OCI-LY7 (cell line): ENCODE measurements at regions of chr17 and their contacts with region 1.

Region 1: GRCh38 chr17:40113110-40113906 is 8.5 kb upstream of the MSL1 start:
- DNase-seq: peak; percentile 97
- H3K4me3 ChIP-seq: peak overlapping the region; percentile 64
- H3K27ac ChIP-seq: peak overlapping the region; percentile 78
- H3K4me1 ChIP-seq: peaks cover 60% of the 10 kb centered on the region
- CTCF ChIP-seq: peak; percentile 95

Region 2: DNA sequence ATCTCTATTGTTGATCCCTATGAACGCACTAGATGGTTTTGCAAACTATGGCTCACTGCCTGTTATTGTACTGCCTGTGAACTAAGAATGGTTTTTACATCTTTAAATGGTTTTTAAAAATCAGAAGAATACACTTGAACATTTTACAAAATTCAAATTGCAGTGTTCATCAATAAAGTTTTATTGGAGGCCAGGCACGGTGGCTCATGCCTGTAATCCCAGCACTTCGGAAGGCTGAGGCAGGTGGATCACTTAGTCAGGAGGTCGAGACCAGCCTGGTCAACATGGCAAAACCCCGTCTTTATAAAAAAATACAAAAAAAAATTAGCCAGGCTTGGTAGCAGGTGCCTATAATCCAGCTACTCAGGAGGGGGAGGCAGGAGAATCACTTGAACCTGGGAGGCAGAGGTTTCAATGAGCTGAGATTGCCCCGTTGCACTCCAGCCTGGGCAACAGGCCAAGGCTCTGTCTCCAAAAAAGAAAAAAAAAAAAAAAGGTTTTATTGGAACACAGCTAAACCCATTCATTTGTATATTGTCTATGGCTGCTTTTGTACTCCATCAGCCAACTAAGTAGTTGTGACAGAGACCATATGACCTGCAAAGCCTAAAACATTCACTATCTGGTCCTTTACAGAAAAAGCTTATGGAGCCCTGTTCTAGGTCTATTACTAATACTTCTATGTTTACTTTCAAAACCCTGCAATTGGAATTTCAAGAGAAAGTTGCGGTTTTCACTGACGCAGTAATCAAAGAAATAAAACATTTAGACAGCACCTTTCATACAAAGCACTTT is 268.1 kb before region 1 on chr17:
- CTCF ChIA-PET with region 1: no interaction called
- POLR2A ChIA-PET with region 1: no interaction called
- intact Hi-C with region 1: no loop called
- DNase-seq: no peak
- H3K4me3 ChIP-seq: no peak overlapping the region
- H3K27ac ChIP-seq: no peak overlapping the region
- H3K4me1 ChIP-seq: peaks cover 76% of the 10 kb centered on the region
- CTCF ChIP-seq: no peak

Region 3: DNA sequence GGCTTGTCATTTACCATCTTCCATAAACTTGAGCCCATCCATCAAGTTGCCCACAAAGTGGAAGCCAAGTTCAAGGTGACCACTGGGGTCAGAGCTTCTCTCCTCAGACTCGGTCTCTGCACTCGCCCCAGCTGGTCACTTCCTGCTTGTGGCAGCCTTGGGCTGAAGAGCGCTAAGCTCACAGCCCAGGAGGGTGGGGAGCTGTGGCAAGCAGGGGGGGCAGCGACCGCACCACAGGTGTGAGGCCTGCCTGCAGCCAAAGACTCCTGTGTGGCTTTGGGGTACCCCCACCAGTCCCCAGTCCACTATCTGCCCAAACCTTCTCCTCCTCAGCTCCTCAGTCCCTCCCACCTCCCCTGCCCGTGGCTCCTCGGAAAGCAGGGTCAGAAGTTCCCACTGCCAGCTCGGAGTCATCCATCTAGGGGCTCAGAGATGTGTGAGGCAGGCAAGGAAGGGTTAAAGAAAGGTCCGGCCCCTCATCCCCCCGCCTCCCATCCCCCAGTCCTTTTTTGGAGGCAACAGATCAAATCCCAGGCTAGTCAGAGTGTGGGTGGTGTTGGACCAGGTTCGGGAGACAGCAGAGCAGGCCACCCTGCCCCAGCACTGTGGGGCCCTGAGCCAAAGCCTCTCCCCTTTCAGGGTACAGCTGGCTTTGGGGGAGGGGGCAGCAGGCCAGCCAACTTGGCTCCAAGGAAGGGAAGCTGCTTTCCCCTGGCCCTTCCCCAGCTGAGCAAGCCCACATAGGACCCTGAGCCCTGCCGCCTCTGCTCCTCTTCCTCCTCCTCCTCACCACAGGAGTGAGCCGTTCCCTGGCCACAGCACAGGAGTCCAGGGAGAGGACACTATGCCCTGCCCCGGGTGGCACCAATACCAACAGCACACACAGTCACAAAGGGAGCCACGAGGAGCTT is 94.8 kb before region 1 on chr17:
- CTCF ChIA-PET with region 1: no interaction called
- POLR2A ChIA-PET with region 1: no interaction called
- intact Hi-C with region 1: loop called (anchors 1 kb)
- DNase-seq: no peak
- H3K4me3 ChIP-seq: no peak overlapping the region
- H3K27ac ChIP-seq: no peak overlapping the region
- H3K4me1 ChIP-seq: no peaks in the 10 kb centered on the region
- CTCF ChIP-seq: no peak

Region 4: DNA sequence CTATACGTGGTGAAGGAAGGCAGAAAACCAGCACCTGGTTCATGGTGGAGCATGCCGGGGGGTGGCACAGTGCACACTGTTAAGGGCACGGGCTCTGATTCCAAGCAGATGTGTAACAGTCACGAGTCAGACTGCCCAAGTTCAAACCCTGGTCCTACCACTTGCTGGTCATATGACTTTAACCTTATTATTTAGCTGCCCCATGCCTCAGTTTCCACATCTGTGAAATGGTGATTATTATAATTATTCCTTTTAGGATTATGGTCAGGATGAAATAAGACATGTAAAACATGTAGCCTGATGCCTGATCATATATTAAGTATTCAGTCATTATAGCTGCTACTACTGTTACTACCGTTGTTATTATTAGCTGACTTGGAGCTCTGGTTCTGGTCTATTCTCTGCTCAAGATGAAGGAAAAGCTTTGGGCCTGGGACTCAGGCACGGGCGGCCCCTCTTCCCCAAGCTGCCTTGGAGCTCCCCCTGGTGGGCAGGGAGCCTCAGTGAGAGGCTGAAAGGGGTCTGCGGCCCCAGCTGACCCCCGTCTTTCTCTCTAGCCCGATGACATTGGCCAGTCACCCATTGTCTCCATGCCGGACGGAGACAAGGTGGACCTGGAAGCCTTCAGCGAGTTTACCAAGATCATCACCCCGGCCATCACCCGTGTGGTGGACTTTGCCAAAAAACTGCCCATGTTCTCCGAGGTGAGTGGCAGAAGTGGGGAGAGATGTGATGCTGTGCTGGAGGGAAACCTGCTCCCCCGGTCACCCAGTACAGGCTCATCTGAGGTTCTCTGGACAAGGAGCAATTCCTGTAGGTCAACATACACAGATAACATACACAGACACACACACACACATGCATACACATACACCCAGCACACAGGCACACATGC is 26.9 kb before region 1 on chr17:
- CTCF ChIA-PET with region 1: interaction called, 6 read pairs
- POLR2A ChIA-PET with region 1: no interaction called
- intact Hi-C with region 1: loop called (anchors 1 kb)
- DNase-seq: peak; percentile 77
- H3K4me3 ChIP-seq: no peak overlapping the region
- H3K27ac ChIP-seq: no peak overlapping the region
- H3K4me1 ChIP-seq: no peaks in the 10 kb centered on the region
- CTCF ChIP-seq: peak; percentile 99

Region 5: DNA sequence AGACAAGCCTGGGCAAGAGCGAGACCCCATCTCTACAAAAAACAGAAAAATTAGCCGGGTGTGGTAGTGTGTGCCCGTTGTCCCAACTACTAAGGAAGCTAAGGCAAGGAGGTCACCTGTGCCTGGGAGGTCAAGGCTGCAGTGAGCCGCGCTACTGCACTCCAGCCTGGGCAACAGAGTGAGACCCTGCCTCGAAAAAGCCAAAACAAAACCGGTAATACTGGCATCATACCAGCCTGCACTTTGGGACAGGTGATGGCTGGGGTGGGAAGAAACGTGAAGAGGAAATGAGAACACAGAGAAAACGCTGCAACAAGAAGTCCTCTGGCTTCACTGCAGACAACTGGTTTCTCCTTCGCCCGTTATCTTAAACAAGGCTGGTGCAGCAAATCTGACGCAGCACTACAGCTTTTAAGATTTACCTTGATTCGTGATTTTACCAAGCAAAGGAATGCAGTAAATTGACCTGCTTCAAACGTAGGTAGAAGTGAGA is 26.3 kb after region 1 on chr17:
- CTCF ChIA-PET with region 1: interaction called, 5 read pairs
- POLR2A ChIA-PET with region 1: interaction called, 6 read pairs
- intact Hi-C with region 1: loop called (anchors 1 kb)
- DNase-seq: no peak
- H3K4me3 ChIP-seq: peak overlapping the region; percentile 75
- H3K27ac ChIP-seq: peak overlapping the region; percentile 78
- H3K4me1 ChIP-seq: peaks cover 21% of the 10 kb centered on the region
- CTCF ChIP-seq: no peak

Region 6: GRCh38 chr17:40191237-40192208 is 78.2 kb after region 1 on chr17:
- CTCF ChIA-PET with region 1: interaction called, 8 read pairs
- POLR2A ChIA-PET with region 1: interaction called, 4 read pairs
- intact Hi-C with region 1: loop called (anchors 1 kb)
- DNase-seq: peak; percentile 84
- H3K4me3 ChIP-seq: peak overlapping the region; percentile 70
- H3K27ac ChIP-seq: no peak overlapping the region
- H3K4me1 ChIP-seq: peaks cover 31% of the 10 kb centered on the region
- CTCF ChIP-seq: peak; percentile 88